SK-N-SH (cell line): ENCODE measurements at regions of chr1 and their contacts with region 1.

Region 1: GRCh38 chr1:203267347-203267846 is 37.9 kb upstream of the BTG2 start:
- DNase-seq: peak; percentile 80
- H3K4me3 ChIP-seq: peak overlapping the region; percentile 65
- H3K27ac ChIP-seq: peak overlapping the region in 1 of 2 experiments; percentile 75; a peak in 1 of 4 replicates
- H3K4me1 ChIP-seq: peaks cover 0 to 15% of the 10 kb centered on the region in 2 experiments; a peak in 1 of 4 replicates
- H3K27me3 ChIP-seq: no peaks in the 10 kb centered on the region; the same call in 1 of the 2 replicates
- CTCF ChIP-seq: peak; percentile 95
- EP300 ChIP-seq: no peak
- RAD21 ChIP-seq: peak; percentile 79

Region 2: DNA sequence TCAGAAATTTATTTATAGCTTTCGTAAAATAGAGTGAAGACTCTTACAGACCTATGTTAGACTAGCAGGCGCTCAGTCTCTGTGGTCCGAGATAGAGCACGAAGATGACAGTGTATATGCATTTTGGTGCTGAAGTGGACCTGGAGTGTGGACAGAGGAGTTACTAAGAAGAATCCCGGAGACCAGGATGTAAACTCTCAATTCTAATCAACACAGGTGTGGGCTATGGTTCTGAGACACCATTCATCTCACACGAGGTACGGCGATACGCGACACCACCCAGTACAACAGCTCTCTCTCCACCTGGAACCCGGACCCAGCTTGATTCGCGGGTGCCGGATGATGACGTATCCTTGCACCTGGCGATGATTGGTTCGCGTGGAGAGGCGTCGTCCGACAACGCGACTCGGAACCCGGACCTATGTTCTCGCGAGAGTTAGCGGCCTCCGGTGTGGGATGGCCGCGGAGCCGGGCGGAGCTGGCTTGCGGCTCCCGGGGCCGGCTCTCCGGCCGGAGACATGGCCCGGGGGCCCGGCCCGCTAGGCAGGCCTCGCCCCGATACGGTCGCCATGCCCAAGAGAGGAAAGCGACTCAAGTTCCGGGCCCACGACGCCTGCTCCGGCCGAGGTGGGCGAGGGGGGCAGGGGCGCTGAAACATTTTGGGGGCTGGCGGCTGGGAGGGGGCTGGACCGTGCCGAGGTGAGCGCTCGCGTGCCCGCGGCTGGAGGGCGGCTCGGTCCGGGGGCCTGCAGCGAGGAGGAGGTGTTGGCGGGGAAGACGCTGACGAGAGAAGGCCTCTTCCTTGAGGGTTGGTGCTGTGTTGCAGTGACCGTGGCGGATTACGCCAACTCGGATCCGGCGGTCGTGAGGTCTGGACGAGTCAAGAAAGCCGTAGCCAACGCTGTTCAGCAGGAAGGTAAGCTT is 260.2 kb before region 1 on chr1 and contains the start of gene TMEM183A:
- CTCF ChIA-PET with region 1: interaction called, 10 read pairs
- POLR2A ChIA-PET with region 1: no interaction called
- DNase-seq: peak; percentile 93
- H3K4me3 ChIP-seq: peak within 1 kb of the TSS; percentile 75 to 77
- H3K27ac ChIP-seq: peak within 1 kb of the TSS; percentile 78 to 80
- H3K4me1 ChIP-seq: peaks cover 6 to 10% of the 10 kb centered on the region in 2 experiments; a peak in 3 of 4 replicates
- H3K27me3 ChIP-seq: no peaks in the 10 kb centered on the region
- CTCF ChIP-seq: no peak
- EP300 ChIP-seq: no peak
- RAD21 ChIP-seq: no peak
- polyA plus RNA-seq, gene TMEM183A: 47.9 and 62.2 TPM in 2 replicates

Region 3: GRCh38 chr1:203117611-203118575 is 149.5 kb before region 1 on chr1:
- CTCF ChIA-PET with region 1: interaction called, 91 read pairs
- POLR2A ChIA-PET with region 1: no interaction called
- DNase-seq: peak; percentile 95
- H3K4me3 ChIP-seq: peak overlapping the region in 1 of 2 experiments; percentile 35; a peak in 1 of 4 replicates
- H3K27ac ChIP-seq: no peak overlapping the region
- H3K4me1 ChIP-seq: no peaks in the 10 kb centered on the region; a peak in 1 of 4 replicates
- H3K27me3 ChIP-seq: peaks cover 11% of the 10 kb centered on the region
- CTCF ChIP-seq: peak; percentile 76
- EP300 ChIP-seq: no peak
- RAD21 ChIP-seq: peak; percentile 95

Region 4: DNA sequence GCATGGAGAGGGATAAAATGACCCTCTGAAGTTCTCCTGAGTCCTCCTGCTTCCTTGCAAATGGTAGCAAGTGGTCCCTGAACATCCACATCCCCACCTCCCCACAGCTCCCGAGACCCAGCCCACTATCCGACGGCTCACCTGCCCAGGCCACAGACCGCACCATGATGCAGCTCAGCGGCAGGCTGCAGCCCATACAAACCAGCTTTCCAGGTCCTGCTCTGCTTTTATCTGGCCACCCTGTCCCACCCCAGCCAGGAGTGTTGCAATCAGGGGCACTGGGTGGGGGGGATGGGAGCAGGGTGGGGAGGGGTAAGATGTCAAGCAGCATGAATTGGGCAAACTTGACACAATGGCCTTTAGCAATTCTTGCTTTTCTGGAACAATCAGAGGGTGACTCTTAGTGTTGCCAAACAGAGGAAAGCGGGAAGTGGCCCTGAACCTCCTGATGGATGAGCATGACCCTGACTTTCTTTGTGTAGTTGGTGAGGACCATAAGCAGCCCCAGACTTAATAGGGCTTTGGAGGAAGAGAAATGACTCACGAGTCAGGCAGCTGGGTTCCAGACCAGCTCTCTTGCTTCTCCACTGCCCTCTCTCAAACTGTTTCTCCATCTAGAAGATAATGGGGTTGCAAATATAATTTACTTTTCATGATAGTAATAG is 37.8 kb before region 1 on chr1 and contains the start of gene CHIT1:
- CTCF ChIA-PET with region 1: interaction called, 12 read pairs
- POLR2A ChIA-PET with region 1: no interaction called
- DNase-seq: no peak
- H3K4me3 ChIP-seq: no peak within 1 kb of the TSS
- H3K27ac ChIP-seq: no peak within 1 kb of the TSS
- H3K4me1 ChIP-seq: no peaks in the 10 kb centered on the region
- H3K27me3 ChIP-seq: peaks cover 38% of the 10 kb centered on the region
- CTCF ChIP-seq: no peak
- EP300 ChIP-seq: no peak
- RAD21 ChIP-seq: no peak
- polyA plus RNA-seq, gene CHIT1: not detected in 2 replicates

Region 5: DNA sequence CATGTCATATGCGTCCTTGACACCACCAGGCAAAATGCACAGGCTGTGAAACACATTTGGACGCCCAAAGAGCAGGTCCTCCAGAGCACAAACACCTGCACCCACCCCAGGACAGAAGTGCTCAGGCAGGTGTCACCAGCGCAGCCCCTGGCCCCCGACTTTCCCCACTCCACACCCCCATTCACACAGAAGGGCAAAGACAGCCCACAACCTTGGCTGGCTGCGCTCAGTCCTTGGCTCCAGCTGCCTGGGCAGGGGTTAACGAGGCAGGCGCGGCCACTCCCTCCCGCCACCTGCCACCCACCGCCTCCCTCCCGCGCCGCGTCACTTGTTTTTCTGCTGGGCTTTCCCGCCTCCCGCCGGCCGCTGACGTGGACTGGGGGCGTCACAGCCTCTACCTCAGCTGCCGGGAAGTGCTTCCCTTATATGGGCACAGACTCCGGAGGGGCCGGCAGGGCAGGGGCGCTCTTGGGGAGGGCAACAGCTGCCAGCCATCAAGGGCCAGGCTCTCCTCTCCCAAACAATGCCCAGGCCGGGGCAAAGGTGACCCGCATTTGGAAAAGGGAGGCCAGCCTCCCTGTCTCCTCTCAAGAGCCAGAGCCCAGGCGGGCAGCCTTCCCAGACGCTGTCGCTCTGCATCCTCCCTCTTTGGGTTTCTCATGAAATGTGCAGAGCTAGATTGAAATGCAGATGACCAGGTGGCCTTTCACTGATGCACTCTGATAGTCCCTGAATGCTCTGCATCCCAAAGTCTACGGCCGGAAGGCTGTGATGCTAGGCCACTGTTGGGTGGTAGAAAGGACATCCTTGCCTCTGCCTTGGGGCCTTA is 23.1 kb after region 1 on chr1:
- CTCF ChIA-PET with region 1: interaction called, 108 read pairs
- POLR2A ChIA-PET with region 1: no interaction called
- DNase-seq: peak; percentile 91
- H3K4me3 ChIP-seq: peak overlapping the region in 1 of 2 experiments; percentile 7; a peak in 1 of 4 replicates
- H3K27ac ChIP-seq: peak overlapping the region in 1 of 2 experiments; percentile 76; a peak in 2 of 4 replicates
- H3K4me1 ChIP-seq: peaks cover 0 to 32% of the 10 kb centered on the region in 2 experiments; a peak in 1 of 4 replicates
- H3K27me3 ChIP-seq: peaks cover 10% of the 10 kb centered on the region
- CTCF ChIP-seq: no peak
- EP300 ChIP-seq: no peak
- RAD21 ChIP-seq: no peak

Region 6: DNA sequence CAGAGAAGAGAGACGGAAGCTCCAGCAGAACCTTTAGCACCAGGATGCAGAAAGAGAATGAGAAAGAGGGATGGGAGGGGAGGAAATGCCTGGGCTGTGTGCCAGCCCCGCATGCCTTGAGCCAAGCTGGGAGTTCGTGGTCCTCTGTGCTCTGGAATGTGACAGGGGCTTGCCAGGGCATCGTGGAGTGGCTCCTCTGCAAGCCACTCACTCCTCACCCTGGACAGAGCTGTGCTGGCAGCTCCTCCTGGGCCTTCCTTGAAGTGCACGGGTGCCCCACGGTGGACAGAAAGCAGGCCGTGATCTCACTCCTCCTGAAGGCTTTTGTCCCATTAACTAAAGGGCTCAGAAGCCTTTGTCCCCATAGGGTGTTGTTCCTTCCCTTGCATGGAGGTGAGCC is 173.4 kb after region 1 on chr1:
- CTCF ChIA-PET with region 1: interaction called, 33 read pairs
- POLR2A ChIA-PET with region 1: no interaction called
- DNase-seq: peak; percentile 61
- H3K4me3 ChIP-seq: no peak overlapping the region
- H3K27ac ChIP-seq: no peak overlapping the region
- H3K4me1 ChIP-seq: peaks cover 6 to 14% of the 10 kb centered on the region in 2 experiments; a peak in 2 of 4 replicates
- H3K27me3 ChIP-seq: no peaks in the 10 kb centered on the region
- CTCF ChIP-seq: peak; percentile 68
- EP300 ChIP-seq: no peak
- RAD21 ChIP-seq: peak; percentile 82

Region 7: GRCh38 chr1:203492082-203492747 is 224.8 kb after region 1 on chr1:
- CTCF ChIA-PET with region 1: interaction called, 34 read pairs
- POLR2A ChIA-PET with region 1: no interaction called
- DNase-seq: no peak
- H3K4me3 ChIP-seq: no peak overlapping the region
- H3K27ac ChIP-seq: no peak overlapping the region
- H3K4me1 ChIP-seq: peaks cover 0 to 17% of the 10 kb centered on the region in 2 experiments; a peak in 1 of 4 replicates
- H3K27me3 ChIP-seq: no peaks in the 10 kb centered on the region
- CTCF ChIP-seq: no peak
- EP300 ChIP-seq: no peak
- RAD21 ChIP-seq: no peak